BJ (cell line): ENCODE measurements at regions of chr5 and their contacts with region 1.

Region 1: GRCh38 chr5:32709781-32710549 is 1.2 kb upstream of the NPR3 start:
- DNase-seq: no peak
- H3K4me3 ChIP-seq: peak overlapping the region; percentile 61
- H3K27me3 ChIP-seq: no peaks in the 10 kb centered on the region
- CTCF ChIP-seq: peak; percentile 82

Region 2: GRCh38 chr5:32916648-32917047 is 206.7 kb after region 1 on chr5:
- CTCF ChIA-PET with region 1: interaction called, 16 read pairs
- POLR2A ChIA-PET with region 1: no interaction called
- DNase-seq: no peak
- H3K4me3 ChIP-seq: no peak overlapping the region
- H3K27me3 ChIP-seq: no peaks in the 10 kb centered on the region
- CTCF ChIP-seq: peak; percentile 72

Region 3: GRCh38 chr5:32955814-32956213 is 245.8 kb after region 1 on chr5:
- CTCF ChIA-PET with region 1: no interaction called
- POLR2A ChIA-PET with region 1: no interaction called
- DNase-seq: no peak
- H3K4me3 ChIP-seq: no peak overlapping the region
- H3K27me3 ChIP-seq: no peaks in the 10 kb centered on the region
- CTCF ChIP-seq: no peak

Region 4: DNA sequence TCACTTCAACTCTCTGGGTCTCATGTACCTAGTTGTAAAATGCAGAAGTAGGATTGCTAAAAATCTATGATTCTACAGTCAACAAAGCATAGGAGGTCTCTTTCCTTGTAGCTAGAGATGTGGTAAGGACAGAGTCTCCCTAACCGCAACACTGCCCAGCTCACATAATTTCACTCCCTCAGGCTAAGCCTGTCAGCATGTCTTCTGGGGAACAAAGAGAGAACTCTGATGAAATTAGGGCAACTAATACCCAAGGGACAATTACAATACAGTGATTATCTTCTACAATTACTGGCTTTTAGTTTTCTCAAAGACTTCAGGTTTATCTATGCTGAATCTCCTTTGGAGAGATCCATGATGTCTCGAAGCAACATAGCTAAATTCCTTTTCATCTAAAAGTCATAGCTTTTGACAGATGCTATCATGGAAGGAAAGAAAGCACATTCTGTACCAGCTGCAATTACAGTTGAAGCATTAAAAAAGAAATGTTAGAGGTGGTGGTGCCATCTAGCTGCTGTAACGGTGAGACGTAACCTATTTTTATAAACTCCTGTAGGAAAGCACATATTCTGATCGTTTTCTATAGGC is 589.8 kb after region 1 on chr5:
- CTCF ChIA-PET with region 1: interaction called, 17 read pairs
- POLR2A ChIA-PET with region 1: no interaction called
- DNase-seq: no peak
- H3K4me3 ChIP-seq: no peak overlapping the region
- H3K27me3 ChIP-seq: no peaks in the 10 kb centered on the region
- CTCF ChIP-seq: peak; percentile 38